ENCODE measurements at regions of chr3 and their contacts with region 1.

Region 1: DNA sequence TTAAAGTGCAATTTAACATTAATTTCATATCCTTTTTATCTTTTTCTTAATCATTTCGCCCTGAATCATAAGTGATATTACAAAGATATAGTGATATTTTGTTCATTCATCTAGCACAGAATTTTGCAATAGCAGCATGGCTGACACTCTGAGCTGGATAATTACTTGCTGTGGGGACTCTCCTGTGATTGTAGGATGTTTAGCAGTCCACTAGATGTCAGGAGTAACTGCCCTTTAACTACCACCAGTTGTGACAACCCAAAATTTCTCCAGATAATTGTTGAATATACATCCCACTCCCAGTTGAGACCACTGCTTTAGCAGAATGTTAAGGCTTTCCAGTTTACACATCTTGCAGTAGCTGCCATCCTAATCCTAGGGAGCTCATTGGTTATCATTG is 196.8 kb upstream of the MBNL1 start:
- DNase-seq: peak in 8 of 35 experiments; percentile 0 to 57 (median 1)
- ATAC-seq: peak in 3 of 4 experiments; percentile 49 to 66 (median 53)
- H3K4me3 ChIP-seq: no peak overlapping the region
- H3K4me3 Mint-ChIP-seq: no peak overlapping the region
- H3K27ac ChIP-seq: no peak overlapping the region
- H3K27ac Mint-ChIP-seq: no peak overlapping the region
- H3K4me1 ChIP-seq: no peaks in the 10 kb centered on the region
- H3K4me1 Mint-ChIP-seq: peaks cover 4 to 9% (median 7%) of the 10 kb centered on the region in 3 donors
- H3K27me3 ChIP-seq: peaks cover 0 to 4% of the 10 kb centered on the region in 2 experiments
- H3K27me3 Mint-ChIP-seq: no peaks in the 10 kb centered on the region

Region 2: GRCh38 chr3:151890721-151891141 is 181.2 kb before region 1 on chr3:
- CTCF ChIA-PET with region 1: no interaction called
- POLR2A ChIA-PET with region 1: no interaction called
- DNase-seq: peak in 1 of 35 experiments; percentile 11
- ATAC-seq: peak in 2 of 4 experiments; percentile 51 to 59
- H3K4me3 ChIP-seq: no peak overlapping the region
- H3K4me3 Mint-ChIP-seq: no peak overlapping the region
- H3K27ac ChIP-seq: no peak overlapping the region
- H3K27ac Mint-ChIP-seq: peak overlapping the region in 1 of 2 donors; percentile 18
- H3K4me1 ChIP-seq: peaks cover 2 to 6% of the 10 kb centered on the region in 2 experiments
- H3K4me1 Mint-ChIP-seq: peaks cover 14 to 23% (median 22%) of the 10 kb centered on the region in 3 donors
- H3K27me3 ChIP-seq: peaks cover 0 to 1% of the 10 kb centered on the region in 2 experiments
- H3K27me3 Mint-ChIP-seq: no peaks in the 10 kb centered on the region

Region 3: DNA sequence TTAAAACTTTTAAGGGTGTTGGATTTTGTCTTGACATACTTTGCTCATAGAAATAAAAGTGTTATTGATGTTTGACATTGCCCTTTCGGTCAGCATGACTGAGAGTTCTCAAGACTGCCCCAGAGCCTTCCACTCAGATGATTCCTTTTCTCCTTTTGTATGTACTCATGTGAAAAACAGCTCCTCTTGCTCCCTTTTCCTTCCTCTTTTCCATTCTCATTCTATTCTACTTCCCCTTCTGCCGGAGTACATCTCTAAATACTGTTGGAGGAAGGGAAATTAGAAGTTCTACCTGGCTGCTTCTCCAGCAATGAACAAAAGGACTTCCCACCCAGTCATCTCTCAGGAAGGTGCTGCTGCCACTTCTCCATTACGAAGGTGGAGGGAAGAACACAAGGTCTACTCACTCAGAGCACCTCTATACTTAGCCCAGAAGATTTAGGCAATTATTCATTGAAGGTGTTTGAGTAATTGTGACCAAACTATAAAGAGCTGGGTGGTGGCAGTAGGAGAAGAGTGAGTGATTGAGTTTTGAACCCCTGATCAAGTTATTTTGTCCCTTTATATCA is 33.0 kb after region 1 on chr3:
- CTCF ChIA-PET with region 1: no interaction called
- POLR2A ChIA-PET with region 1: no interaction called
- DNase-seq: no peak
- ATAC-seq: no peak
- H3K4me3 ChIP-seq: no peak overlapping the region
- H3K4me3 Mint-ChIP-seq: no peak overlapping the region
- H3K27ac ChIP-seq: no peak overlapping the region
- H3K27ac Mint-ChIP-seq: no peak overlapping the region
- H3K4me1 ChIP-seq: no peaks in the 10 kb centered on the region
- H3K4me1 Mint-ChIP-seq: peaks cover 0 to 9% (median 0%) of the 10 kb centered on the region in 3 donors
- H3K27me3 ChIP-seq: no peaks in the 10 kb centered on the region
- H3K27me3 Mint-ChIP-seq: no peaks in the 10 kb centered on the region

Region 4: DNA sequence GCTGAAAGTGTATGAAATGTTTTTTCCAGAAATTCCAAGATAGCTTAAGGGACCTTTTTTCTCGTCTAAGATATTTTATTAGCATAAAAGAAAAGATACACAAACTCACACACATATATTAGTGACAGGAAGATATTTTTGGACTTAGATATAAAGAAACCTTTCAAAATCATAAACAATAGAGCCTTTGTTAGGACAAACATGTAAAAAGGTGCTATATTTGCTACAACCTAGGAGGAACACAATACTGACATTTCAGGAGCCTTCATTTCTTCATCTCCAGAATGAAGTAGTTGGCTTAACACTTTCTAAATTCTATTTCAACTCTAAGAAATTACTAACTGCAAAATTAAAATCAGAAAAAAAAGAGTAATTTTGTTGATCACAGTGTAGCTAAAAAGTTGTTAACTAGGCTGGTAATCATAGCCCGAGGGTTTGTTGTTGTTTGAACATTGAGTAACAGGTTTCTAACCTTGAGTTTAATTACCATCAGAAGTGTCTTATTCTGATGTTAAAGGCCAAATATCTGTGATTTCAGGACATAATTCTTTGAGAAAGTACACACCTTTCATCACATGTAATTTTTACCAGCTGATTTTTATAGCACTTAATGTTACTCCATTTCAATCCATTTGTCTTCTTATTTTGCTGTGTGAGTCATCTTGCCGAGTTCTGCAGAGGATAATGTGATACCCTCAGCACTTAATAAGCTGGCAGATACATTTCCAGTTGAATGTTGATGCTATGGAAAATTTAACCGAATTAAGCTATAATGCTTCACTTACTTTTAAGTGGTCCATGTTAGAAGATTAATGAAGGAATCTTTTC is 294.1 kb after region 1 on chr3:
- CTCF ChIA-PET with region 1: no interaction called
- POLR2A ChIA-PET with region 1: no interaction called
- DNase-seq: no peak
- ATAC-seq: peak in 1 of 4 experiments; percentile 24
- H3K4me3 ChIP-seq: no peak overlapping the region
- H3K4me3 Mint-ChIP-seq: no peak overlapping the region
- H3K27ac ChIP-seq: no peak overlapping the region
- H3K27ac Mint-ChIP-seq: peak overlapping the region in 1 of 2 donors; percentile 73
- H3K4me1 ChIP-seq: peaks cover 4% of the 10 kb centered on the region in 2 experiments
- H3K4me1 Mint-ChIP-seq: peaks cover 78 to 83% (median 81%) of the 10 kb centered on the region in 3 donors
- H3K27me3 ChIP-seq: no peaks in the 10 kb centered on the region
- H3K27me3 Mint-ChIP-seq: no peaks in the 10 kb centered on the region

Region 5: DNA sequence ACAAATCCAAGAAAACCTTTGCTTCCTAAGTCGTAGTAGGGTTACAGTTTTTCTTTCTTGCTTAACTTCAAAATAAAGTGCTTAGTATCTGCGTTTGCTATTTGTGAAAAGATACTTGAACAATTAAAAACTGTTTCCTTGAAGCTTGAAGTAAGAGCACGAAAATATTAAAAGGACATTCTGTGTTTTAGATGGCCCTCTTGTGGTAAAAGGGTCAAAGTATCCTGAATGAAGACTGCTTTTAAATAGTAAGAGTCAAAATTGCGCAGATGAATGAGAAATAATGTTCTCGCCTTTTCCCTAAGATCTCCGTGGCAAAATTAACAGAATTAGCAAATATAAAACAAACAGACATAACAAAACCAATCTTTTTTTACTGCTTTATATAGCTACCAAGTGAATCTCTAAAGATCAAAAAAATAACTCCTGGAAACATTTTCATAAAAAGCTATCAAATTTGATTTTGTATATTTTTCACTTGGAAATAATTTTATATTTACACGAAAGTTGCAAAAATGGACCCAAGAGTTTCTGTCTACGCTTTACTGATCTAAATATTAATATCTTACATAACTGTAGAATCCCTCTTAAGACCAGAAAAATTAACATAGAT is 372.2 kb after region 1 on chr3:
- CTCF ChIA-PET with region 1: interaction called, 4 to 13 read pairs
- POLR2A ChIA-PET with region 1: no interaction called
- DNase-seq: peak in 1 of 35 experiments; percentile 64
- ATAC-seq: peak in 3 of 4 experiments; percentile 31 to 40 (median 36)
- H3K4me3 ChIP-seq: no peak overlapping the region
- H3K4me3 Mint-ChIP-seq: peak overlapping the region in 1 of 3 donors; percentile 1
- H3K27ac ChIP-seq: peak overlapping the region; percentile 8
- H3K27ac Mint-ChIP-seq: peak overlapping the region; percentile 40 to 73
- H3K4me1 ChIP-seq: peaks cover 8 to 15% of the 10 kb centered on the region in 2 experiments
- H3K4me1 Mint-ChIP-seq: peaks cover 77 to 83% (median 81%) of the 10 kb centered on the region in 3 donors
- H3K27me3 ChIP-seq: no peaks in the 10 kb centered on the region
- H3K27me3 Mint-ChIP-seq: no peaks in the 10 kb centered on the region

Region 6: GRCh38 chr3:152471814-152472671 is 400.1 kb after region 1 on chr3:
- CTCF ChIA-PET with region 1: interaction called, 3 to 15 read pairs
- POLR2A ChIA-PET with region 1: no interaction called
- DNase-seq: peak; percentile 46 to 85 (median 66)
- ATAC-seq: peak; percentile 81 to 89 (median 84)
- H3K4me3 ChIP-seq: peak overlapping the region; percentile 25 to 39
- H3K4me3 Mint-ChIP-seq: peak overlapping the region; percentile 62 to 72 (median 66)
- H3K27ac ChIP-seq: peak overlapping the region; percentile 52
- H3K27ac Mint-ChIP-seq: peak overlapping the region; percentile 72 to 80
- H3K4me1 ChIP-seq: peaks cover 0 to 9% of the 10 kb centered on the region in 2 experiments
- H3K4me1 Mint-ChIP-seq: peaks cover 15 to 20% (median 16%) of the 10 kb centered on the region in 3 donors
- H3K27me3 ChIP-seq: no peaks in the 10 kb centered on the region
- H3K27me3 Mint-ChIP-seq: no peaks in the 10 kb centered on the region